WTC11 (cell line): ENCODE measurements at regions of chr12 and their contacts with region 1.

Region 1: DNA sequence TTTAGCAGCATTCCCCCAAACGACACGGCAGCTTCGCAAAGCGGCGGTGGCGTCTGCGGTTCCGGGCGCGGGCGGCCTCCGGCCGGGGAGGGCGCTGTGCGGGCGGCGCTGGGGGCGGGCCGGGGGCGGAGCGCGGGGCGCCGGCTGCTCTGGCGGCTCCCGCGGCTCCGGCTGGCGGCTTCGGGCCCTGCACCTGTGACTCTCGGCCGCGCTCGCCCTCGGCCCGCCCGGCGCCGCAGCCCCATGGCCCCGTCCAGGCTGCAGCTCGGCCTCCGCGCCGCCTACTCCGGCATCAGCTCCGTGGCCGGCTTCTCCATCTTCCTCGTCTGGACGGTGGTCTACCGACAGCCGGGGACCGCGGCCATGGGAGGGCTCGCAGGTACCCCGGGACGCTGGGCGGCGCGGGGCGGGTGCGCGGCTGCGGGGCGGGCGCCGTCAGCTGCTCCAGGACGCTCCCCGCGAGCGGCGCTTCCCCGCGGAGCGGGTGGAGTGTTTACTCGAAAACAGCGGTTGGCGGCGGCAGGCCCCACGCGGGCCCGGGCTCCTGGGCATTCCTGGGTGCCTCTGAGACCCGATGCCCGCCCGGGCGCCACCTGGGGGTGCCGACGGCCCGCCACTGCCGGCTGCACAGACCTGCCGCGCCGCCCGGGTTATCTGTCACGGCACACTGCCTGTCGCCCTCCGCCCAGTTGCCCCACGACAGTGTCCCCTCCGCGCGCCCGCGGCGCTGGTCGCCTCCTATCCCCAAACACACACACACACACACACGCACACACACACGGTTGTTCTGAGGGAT is at the start of gene SLC48A1:
- DNase-seq: peak; percentile 80
- ATAC-seq: peak; percentile 81
- H3K4me3 Mint-ChIP-seq: peak within 1 kb of the TSS; percentile 82
- H3K27ac Mint-ChIP-seq: peak within 1 kb of the TSS; percentile 32; the same call in 1 of the 2 replicates
- H3K4me1 Mint-ChIP-seq: peaks cover 32% of the 10 kb centered on the region
- H3K27me3 Mint-ChIP-seq: peaks cover 27% of the 10 kb centered on the region
- CTCF ChIP-seq: no peak
- total RNA-seq, gene SLC48A1: 13.5 to 16.8 TPM (median 13.8 TPM) in 3 replicates

Region 2: DNA sequence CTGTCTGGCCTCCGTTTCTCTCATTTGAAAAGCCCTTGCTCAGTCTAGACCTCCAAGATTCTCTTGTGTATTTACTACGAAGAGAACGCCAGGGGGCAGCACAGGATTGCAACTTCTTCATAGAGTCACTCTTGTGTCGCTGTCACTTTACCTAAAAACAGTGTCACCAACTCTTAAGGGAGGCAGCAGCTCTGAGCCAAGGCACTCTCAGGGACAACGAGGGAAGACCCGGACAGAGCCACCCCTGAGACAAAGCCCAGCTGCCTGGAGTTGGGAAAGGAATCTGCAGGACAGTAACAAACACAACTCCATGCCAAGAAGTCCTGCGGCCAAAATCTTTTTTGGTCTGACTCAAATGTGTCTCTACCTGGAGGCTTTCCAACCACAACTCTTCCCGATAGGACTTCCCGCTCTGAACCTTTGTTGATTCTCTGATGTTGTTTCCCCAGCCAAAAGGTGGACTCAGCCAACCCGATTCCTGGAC is 57.8 kb before region 1 on chr12:
- CTCF ChIA-PET with region 1: interaction called, 102 read pairs
- POLR2A ChIA-PET with region 1: no interaction called
- DNase-seq: peak; percentile 71
- ATAC-seq: peak; percentile 43
- H3K4me3 Mint-ChIP-seq: no peak overlapping the region
- H3K27ac Mint-ChIP-seq: no peak overlapping the region
- H3K4me1 Mint-ChIP-seq: peaks cover 29% of the 10 kb centered on the region
- H3K27me3 Mint-ChIP-seq: peaks cover 72% of the 10 kb centered on the region
- CTCF ChIP-seq: peak; percentile 72

Region 3: DNA sequence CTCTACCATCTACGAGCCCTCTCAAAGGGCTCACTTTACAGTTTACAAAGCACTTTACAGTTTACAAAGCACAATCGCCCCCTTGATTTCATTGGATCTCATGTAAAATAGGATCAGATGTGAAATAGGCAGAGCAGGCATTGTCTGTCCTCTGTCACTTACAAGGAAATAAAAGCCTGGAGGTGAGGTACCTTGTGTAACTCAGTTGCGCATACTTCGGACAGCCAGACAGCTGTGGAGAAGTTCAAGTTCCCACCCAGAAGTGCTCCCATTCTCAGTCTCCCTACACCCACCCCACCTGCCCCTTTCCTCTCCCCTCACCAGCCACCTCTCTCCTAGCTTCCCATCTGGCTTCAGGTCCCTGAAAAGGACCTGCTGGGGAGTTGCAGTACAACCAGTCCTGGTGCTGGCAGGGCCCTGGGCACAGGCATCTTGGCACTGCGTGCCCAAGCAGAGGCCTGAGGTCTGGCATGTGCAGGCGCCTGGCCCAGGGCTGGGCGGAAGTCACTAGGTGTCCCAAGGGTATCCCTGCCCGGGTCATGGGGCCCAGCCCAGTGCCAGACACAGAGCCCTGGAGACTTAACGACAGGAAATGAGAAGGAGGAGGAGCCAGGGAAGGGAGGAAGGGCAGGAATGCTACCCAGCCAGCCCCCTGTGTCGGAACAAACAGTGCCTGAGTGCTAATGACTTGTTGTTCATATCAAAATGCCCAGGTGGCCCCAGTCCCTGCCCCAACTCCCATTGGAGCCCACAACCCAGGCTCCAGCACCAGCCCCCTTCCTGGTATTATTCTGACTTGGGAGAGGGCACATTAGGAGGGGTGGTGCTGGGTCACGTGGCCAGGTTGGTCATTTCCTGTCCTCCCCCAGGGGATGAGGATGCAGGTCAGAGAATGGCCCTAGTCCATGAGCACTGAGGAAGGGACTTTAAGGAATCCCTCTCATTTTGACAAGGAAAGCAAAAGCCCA is 19.9 kb before region 1 on chr12:
- CTCF ChIA-PET with region 1: interaction called, 157 read pairs
- POLR2A ChIA-PET with region 1: interaction called, 6 read pairs
- DNase-seq: peak; percentile 53
- ATAC-seq: peak; percentile 86
- H3K4me3 Mint-ChIP-seq: peak overlapping the region; percentile 44; the same call in 1 of the 2 replicates
- H3K27ac Mint-ChIP-seq: peak overlapping the region; percentile 96
- H3K4me1 Mint-ChIP-seq: peaks cover 62% of the 10 kb centered on the region
- H3K27me3 Mint-ChIP-seq: no peaks in the 10 kb centered on the region; the same call in 1 of the 2 replicates
- CTCF ChIP-seq: no peak

Region 4: DNA sequence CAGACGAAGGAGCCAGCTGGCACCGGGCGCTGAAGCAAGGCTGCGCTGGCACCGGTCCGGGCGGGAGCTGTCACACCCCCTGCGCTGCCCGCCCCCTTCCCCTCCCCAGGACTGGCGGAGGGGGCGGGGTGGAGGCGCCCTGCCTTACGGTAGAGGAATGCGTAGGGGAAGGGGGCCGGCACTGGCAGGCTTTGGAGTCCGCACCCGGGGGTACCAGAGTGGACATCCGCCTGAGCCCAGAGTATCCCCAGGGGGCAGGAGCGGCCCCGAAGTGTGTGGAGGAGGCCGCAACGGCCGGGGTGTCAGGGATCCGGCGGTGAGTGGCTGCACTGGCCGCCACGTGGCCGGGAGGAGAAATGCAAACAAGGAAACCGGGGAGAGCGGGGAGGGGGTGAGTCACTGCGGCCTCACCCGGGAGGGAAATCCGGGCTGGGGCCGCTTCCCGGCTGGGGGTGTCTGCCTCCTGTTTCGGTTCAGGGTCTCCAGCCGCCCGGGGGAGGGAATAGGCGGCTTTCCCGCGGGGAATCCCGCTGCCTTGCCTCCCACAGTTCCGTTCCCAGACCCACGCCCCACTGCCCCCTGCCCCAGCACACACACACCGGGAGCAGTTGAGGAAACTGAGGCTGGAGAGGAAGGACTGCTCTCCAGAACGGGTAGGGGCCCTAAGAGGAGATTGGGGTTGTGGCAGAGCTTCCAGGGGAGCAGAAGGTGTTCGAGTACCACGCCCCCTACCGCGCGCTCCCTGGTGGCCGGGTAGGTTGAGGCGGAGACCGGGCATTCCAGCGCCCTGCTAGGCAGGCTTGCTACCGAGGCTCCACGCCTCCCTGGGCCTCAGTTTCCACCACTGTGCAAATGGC is 14.2 kb before region 1 on chr12 and contains the start of gene RAPGEF3:
- CTCF ChIA-PET with region 1: interaction called, 157 read pairs
- POLR2A ChIA-PET with region 1: interaction called, 6 read pairs
- DNase-seq: peak; percentile 74
- ATAC-seq: peak; percentile 79
- H3K4me3 Mint-ChIP-seq: peak within 1 kb of the TSS; percentile 67
- H3K27ac Mint-ChIP-seq: no peak within 1 kb of the TSS
- H3K4me1 Mint-ChIP-seq: peaks cover 53% of the 10 kb centered on the region
- H3K27me3 Mint-ChIP-seq: no peaks in the 10 kb centered on the region; the same call in 1 of the 2 replicates
- CTCF ChIP-seq: no peak; the same call in 1 of the 2 replicates
- total RNA-seq, gene RAPGEF3: 9.0 to 13.3 TPM (median 9.7 TPM) in 3 replicates

Region 5: GRCh38 chr12:47858511-47859266 is 85.4 kb after region 1 on chr12:
- CTCF ChIA-PET with region 1: no interaction called
- POLR2A ChIA-PET with region 1: no interaction called
- DNase-seq: no peak
- ATAC-seq: no peak
- H3K4me3 Mint-ChIP-seq: no peak overlapping the region
- H3K27ac Mint-ChIP-seq: no peak overlapping the region
- H3K4me1 Mint-ChIP-seq: no peaks in the 10 kb centered on the region
- H3K27me3 Mint-ChIP-seq: peaks cover 4% of the 10 kb centered on the region
- CTCF ChIP-seq: no peak